Endothelial cell of umbilical vein (primary cell): ENCODE measurements at regions of chr4 and their contacts with region 1.

Region 1: GRCh38 chr4:123396307-123397143 is at the start of gene SPRY1:
- DNase-seq: peak; percentile 89
- H3K4me3 ChIP-seq: peak within 1 kb of the TSS; percentile 27 to 84 (median 49)
- H3K27ac ChIP-seq: peak within 1 kb of the TSS; percentile 53
- H3K4me1 ChIP-seq: peaks cover 15% of the 10 kb centered on the region
- H3K27me3 ChIP-seq: no peaks in the 10 kb centered on the region
- CTCF ChIP-seq: no peak
- POLR2A ChIP-seq: peak; percentile 68
- total RNA-seq, gene SPRY1: 43.7 and 59.6 TPM in 2 replicates

Region 2: GRCh38 chr4:123102897-123103471 is 293.5 kb before region 1 on chr4:
- CTCF ChIA-PET with region 1: interaction called, 4 read pairs
- POLR2A ChIA-PET with region 1: no interaction called
- dilution Hi-C with region 1: no loop called
- intact Hi-C with region 1: loop called (anchors 2 kb)
- DNase-seq: peak; percentile 52
- H3K4me3 ChIP-seq: no peak overlapping the region
- H3K27ac ChIP-seq: no peak overlapping the region
- H3K4me1 ChIP-seq: no peaks in the 10 kb centered on the region
- H3K27me3 ChIP-seq: no peaks in the 10 kb centered on the region
- CTCF ChIP-seq: peak; percentile 37 to 44
- POLR2A ChIP-seq: no peak

Region 3: DNA sequence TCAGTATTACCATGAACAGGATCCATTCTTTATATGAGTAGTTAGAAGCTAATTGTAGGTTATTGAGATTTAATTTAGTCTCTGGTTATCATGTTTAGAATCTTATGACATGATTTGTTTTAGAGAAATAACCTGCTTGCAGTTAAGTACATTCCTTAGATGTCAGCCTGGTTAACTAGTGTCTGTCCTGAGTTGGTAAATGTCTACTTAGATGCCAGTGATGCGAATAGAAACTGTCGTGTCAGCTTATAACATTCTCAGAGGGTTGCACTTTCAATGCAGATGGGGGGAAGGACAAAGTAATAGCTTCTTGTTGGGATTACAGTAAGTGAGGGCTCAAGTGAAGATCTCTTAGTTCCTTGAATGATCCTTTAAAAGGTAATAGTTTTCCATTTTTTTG is 227.7 kb before region 1 on chr4:
- CTCF ChIA-PET with region 1: no interaction called
- POLR2A ChIA-PET with region 1: no interaction called
- dilution Hi-C with region 1: no loop called
- intact Hi-C with region 1: no loop called
- DNase-seq: no peak
- H3K4me3 ChIP-seq: no peak overlapping the region
- H3K27ac ChIP-seq: no peak overlapping the region
- H3K4me1 ChIP-seq: no peaks in the 10 kb centered on the region
- H3K27me3 ChIP-seq: no peaks in the 10 kb centered on the region
- CTCF ChIP-seq: no peak
- POLR2A ChIP-seq: no peak

Region 4: DNA sequence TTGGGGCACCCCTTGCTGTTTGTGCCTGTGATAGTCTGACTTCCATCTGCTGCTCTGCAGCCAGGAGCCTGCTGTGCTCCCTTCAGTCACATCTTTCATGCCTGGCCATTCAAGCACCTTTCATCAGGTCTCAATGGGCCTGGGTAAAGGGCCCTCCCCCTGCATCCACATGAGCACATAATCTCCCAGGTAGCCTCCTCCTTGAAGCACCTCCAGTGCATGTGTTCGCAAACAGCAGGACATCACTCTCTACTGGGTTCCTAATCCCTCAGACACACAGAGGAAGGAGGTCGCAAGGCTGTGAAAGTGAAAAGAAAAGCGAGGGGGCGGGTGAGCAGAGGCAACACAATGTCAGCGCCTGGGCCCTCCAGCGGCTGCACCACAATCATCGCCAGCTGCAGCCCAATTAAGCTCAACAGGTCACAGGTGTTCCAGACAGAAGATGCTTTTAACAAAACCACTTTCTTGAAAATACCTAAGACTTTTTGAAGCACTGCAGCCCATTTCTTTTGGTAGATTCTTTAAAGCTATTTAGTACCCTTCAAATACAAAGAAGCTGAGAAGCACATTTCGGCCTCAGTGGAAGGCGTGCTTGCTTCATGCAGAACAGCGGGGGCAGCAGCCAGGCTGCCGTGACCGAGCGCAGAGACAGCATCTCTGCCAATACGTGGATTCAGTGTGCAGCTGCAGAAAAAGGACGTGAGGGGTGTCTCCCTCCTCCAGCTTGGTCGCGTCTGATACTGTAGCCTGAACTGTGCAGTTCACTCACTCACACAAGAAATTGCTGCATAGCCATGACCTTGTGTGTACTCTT is 92.2 kb before region 1 on chr4:
- CTCF ChIA-PET with region 1: no interaction called
- POLR2A ChIA-PET with region 1: no interaction called
- dilution Hi-C with region 1: no loop called
- intact Hi-C with region 1: no loop called
- DNase-seq: no peak
- H3K4me3 ChIP-seq: no peak overlapping the region
- H3K27ac ChIP-seq: no peak overlapping the region
- H3K4me1 ChIP-seq: no peaks in the 10 kb centered on the region
- H3K27me3 ChIP-seq: no peaks in the 10 kb centered on the region
- CTCF ChIP-seq: no peak
- POLR2A ChIP-seq: no peak

Region 5: DNA sequence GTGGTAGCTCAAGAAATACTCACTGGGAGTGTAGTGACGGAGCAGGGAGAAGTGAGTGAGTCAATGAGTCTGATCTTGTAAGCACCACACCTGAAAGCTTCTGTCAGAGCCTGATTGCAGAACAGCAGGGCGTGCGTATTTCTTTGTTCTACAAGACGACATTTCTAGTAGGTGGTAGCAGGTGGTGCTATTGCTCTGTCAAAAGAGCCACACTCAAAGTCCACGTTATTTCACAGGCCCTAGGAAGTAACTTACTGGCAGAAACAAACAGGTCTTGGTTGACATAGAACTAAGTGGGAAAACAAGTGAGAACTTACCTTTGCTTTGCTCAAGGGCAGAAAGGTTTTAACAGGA is 46.4 kb before region 1 on chr4:
- CTCF ChIA-PET with region 1: no interaction called
- POLR2A ChIA-PET with region 1: no interaction called
- dilution Hi-C with region 1: no loop called
- intact Hi-C with region 1: no loop called
- DNase-seq: peak; percentile 36
- H3K4me3 ChIP-seq: no peak overlapping the region
- H3K27ac ChIP-seq: no peak overlapping the region
- H3K4me1 ChIP-seq: peaks cover 11% of the 10 kb centered on the region
- H3K27me3 ChIP-seq: no peaks in the 10 kb centered on the region
- CTCF ChIP-seq: no peak
- POLR2A ChIP-seq: no peak

Region 6: DNA sequence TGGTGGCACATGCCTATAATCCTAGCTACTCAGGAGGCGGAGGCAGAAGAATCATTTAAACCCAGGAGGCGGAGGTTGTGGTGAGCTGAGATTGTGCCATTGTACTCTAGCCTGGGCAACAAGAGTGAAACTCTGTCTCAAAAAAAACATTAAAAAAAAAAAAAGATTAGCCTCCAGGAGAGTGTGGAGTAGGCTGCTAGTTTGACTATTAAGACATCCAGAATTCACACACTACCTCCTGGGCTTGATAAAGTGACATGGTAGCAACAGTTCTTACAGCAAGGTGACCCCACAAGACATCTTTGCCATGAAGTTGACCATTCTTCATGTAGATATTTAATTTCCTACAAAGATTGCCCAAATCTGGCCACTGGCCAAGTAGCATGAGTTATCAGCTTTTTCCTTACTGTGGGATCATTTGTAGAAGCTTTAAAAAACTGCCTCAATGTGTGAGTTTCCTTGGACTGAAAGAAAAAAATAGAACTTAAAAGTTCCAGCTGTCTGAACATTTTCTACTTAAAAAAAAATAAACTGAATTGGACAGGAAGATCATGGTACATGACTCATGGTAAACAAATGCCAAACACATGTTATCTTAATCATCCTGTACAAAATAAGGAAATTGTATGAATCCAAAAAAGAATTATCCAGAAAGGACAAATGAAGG is 35.2 kb before region 1 on chr4:
- CTCF ChIA-PET with region 1: interaction called, 10 read pairs
- POLR2A ChIA-PET with region 1: interaction called, 3 read pairs
- dilution Hi-C with region 1: no loop called
- intact Hi-C with region 1: loop called (anchors 1 kb)
- DNase-seq: peak; percentile 93
- H3K4me3 ChIP-seq: no peak overlapping the region
- H3K27ac ChIP-seq: peak overlapping the region; percentile 98
- H3K4me1 ChIP-seq: peaks cover 24% of the 10 kb centered on the region
- H3K27me3 ChIP-seq: no peaks in the 10 kb centered on the region
- CTCF ChIP-seq: no peak
- POLR2A ChIP-seq: no peak

Region 7: DNA sequence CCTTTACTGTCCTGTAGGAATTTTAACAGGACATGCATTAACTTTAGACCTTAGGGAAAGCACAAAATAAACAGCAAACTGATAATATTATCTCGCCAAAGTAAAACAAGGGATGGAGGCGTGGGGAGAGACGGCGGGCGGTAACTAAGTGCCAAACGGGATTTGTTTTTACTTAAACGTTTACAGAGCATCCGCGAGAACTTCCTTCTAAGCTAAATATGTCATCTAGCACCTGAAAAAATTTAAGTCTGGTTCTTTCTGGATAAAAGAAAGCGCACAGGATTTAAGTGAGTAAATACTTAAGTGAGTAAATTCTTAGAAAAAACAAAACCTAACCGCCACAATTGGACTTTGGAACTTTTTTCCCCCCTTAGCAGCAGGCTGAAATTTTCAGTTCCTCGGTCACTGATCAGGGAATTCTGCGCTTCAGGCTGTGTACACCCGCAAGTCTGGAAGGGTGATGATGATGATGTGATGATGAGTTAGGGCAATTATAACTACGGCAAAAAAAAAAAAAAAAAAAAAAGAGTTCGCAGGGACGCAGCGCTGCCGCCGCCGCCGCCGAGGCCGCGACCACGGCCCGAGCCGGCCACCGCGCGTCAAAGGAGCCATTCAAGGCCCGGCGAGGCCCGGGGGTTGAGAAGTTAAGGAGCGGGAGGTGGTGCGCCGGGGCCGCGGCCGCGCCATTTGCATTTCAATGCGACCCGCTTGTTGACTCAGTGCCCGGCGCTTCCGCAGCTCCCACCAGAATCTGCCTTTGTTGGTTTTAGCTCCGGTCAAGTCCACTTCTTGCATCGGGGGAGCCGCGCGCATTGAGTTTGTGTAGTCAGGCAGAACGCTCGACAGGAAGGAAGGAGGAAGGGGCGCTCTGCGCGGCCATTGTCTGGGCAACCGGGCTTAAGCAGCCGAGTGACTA is 108.8 kb after region 1 on chr4:
- CTCF ChIA-PET with region 1: interaction called, 4 read pairs
- POLR2A ChIA-PET with region 1: no interaction called
- dilution Hi-C with region 1: no loop called
- intact Hi-C with region 1: loop called (anchors 1 kb)
- DNase-seq: peak; percentile 74
- H3K4me3 ChIP-seq: peak overlapping the region; percentile 35 to 72 (median 61)
- H3K27ac ChIP-seq: peak overlapping the region; percentile 65
- H3K4me1 ChIP-seq: peaks cover 16% of the 10 kb centered on the region
- H3K27me3 ChIP-seq: no peaks in the 10 kb centered on the region
- CTCF ChIP-seq: no peak
- POLR2A ChIP-seq: no peak

Region 8: DNA sequence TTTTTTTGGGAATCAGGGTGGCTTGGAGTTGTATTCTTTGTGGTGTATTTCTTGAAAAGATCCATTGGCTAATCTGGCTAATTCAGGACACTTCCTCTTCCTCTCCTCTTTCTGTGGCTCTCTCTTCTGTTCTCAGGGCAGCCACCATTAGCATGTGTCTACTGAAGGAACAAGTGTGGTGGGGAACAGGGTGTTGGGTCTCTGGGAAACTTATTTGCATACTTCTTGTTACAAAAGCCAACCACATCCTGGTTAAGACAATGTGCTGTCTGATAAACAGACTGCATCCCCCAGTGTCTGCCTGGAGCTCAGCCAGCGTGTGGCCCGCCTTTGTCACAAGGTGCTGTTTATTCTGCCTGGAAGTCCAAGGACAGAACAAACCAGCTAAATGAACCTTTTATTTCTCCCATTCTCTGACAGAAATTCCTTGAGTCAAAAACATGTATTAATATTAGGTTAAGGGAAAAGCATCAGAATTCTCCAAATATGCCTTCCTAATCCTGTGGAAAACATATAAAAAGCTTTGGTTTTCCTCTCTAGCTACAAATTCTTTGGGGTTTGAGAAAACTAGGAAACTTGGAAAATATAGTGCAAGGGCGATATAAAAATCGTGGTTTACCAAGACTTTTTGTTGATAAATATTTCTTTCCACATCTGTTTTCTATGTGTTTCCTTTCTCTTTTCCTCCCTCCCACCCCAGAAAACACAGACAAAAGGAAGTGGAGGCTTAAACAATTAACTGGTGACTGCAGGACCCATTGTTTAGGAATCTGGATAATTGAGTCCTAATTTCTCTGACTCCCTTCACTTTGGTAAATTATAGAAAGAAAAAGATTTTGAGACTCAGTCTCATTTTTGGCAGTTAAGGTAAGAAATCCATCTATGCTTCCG is 203.6 kb after region 1 on chr4:
- CTCF ChIA-PET with region 1: no interaction called
- POLR2A ChIA-PET with region 1: no interaction called
- dilution Hi-C with region 1: no loop called
- intact Hi-C with region 1: loop called (anchors 1 kb)
- DNase-seq: peak; percentile 94
- H3K4me3 ChIP-seq: no peak overlapping the region
- H3K27ac ChIP-seq: peak overlapping the region; percentile 73
- H3K4me1 ChIP-seq: peaks cover 23% of the 10 kb centered on the region
- H3K27me3 ChIP-seq: no peaks in the 10 kb centered on the region
- CTCF ChIP-seq: no peak
- POLR2A ChIP-seq: no peak

Region 9: DNA sequence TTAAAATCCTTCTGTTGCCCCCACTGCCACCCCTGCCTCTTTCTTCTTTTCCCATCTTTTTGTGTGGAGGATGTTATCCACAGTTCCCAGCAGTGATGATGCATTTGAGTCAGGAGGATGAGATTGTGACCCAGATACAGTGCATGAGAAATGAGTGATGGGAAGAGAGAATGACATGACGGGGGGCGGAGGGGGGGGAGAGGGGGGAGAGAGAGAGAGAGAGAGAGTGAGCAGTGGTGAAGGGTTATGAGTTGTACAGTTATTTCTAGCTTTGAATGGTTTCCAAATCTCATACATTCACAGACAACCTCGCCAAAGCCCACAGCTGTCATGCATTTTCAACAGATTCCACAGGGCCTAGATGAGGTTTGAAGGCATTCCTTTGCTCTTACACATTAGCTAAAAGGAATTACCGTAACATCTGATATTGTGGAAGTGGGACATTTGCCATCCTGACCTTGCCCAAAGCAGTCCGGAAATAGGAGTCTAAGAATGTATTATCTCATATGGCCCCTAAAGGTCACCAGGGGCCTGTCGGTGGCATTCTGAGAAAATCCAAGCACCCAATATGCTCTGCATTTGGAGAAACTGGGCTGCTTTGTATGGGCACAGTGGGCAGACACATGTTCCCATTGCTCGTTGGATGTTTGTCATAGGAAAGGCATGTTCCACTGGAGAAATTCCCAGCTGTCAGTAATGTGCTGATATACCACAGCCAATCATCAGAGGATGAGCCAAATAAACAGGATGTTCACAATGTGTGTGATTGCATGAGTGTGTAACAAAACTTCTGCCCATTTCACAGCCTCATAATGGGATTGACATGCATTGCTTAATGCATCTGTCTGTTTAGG is 435.9 kb after region 1 on chr4:
- CTCF ChIA-PET with region 1: no interaction called
- POLR2A ChIA-PET with region 1: no interaction called
- dilution Hi-C with region 1: no loop called
- intact Hi-C with region 1: loop called (anchors 2 kb)
- DNase-seq: peak; percentile 86
- H3K4me3 ChIP-seq: no peak overlapping the region
- H3K27ac ChIP-seq: peak overlapping the region; percentile 93
- H3K4me1 ChIP-seq: peaks cover 38% of the 10 kb centered on the region
- H3K27me3 ChIP-seq: no peaks in the 10 kb centered on the region
- CTCF ChIP-seq: no peak
- POLR2A ChIP-seq: peak; percentile 24